ENCODE measurements at regions of chr15 and their contacts with region 1.

Region 1: GRCh38 chr15:77419836-77420609 is at the start of gene PEAK1:
- DNase-seq: peak; percentile 99 to 100 (median 100)
- ATAC-seq: peak; percentile 99
- H3K4me3 ChIP-seq: peak within 1 kb of the TSS; percentile 70
- H3K4me3 Mint-ChIP-seq: peak within 1 kb of the TSS; percentile 99
- H3K27ac ChIP-seq: peak within 1 kb of the TSS; percentile 86 to 87
- H3K27ac Mint-ChIP-seq: peak within 1 kb of the TSS; percentile 96
- H3K4me1 ChIP-seq: peaks cover 14% of the 10 kb centered on the region
- H3K4me1 Mint-ChIP-seq: peaks cover 54% of the 10 kb centered on the region
- H3K27me3 ChIP-seq: no peaks in the 10 kb centered on the region
- H3K27me3 Mint-ChIP-seq: no peaks in the 10 kb centered on the region
- CTCF ChIP-seq: no peak
- total RNA-seq, gene PEAK1: 9.2 to 11.0 TPM

Region 2: GRCh38 chr15:76905013-76905839 is 514.8 kb before region 1 on chr15 and contains the start of gene SCAPER:
- CTCF ChIA-PET with region 1: no interaction called
- POLR2A ChIA-PET with region 1: interaction called, 3 read pairs
- intact Hi-C with region 1: loop called in 1 of 2 experiments (anchors 5 kb)
- DNase-seq: peak; percentile 77 to 96 (median 90)
- ATAC-seq: peak; percentile 89
- H3K4me3 ChIP-seq: peak within 1 kb of the TSS; percentile 83
- H3K4me3 Mint-ChIP-seq: peak within 1 kb of the TSS; percentile 96
- H3K27ac ChIP-seq: peak within 1 kb of the TSS; percentile 60 to 75
- H3K27ac Mint-ChIP-seq: peak within 1 kb of the TSS; percentile 95
- H3K4me1 ChIP-seq: peaks cover 25% of the 10 kb centered on the region
- H3K4me1 Mint-ChIP-seq: peaks cover 31% of the 10 kb centered on the region
- H3K27me3 ChIP-seq: no peaks in the 10 kb centered on the region
- H3K27me3 Mint-ChIP-seq: no peaks in the 10 kb centered on the region
- CTCF ChIP-seq: no peak
- total RNA-seq, gene SCAPER: 40.3 to 41.2 TPM

Region 3: GRCh38 chr15:76931397-76932007 is 488.5 kb before region 1 on chr15 and contains the start of gene RCN2:
- CTCF ChIA-PET with region 1: no interaction called
- POLR2A ChIA-PET with region 1: no interaction called
- intact Hi-C with region 1: loop called in 1 of 2 experiments (anchors 10 kb)
- DNase-seq: peak; percentile 84 to 96 (median 91)
- ATAC-seq: peak; percentile 98
- H3K4me3 ChIP-seq: peak within 1 kb of the TSS; percentile 59
- H3K4me3 Mint-ChIP-seq: peak within 1 kb of the TSS; percentile 98
- H3K27ac ChIP-seq: peak within 1 kb of the TSS in 1 of 2 donors; percentile 53
- H3K27ac Mint-ChIP-seq: peak within 1 kb of the TSS; percentile 91
- H3K4me1 ChIP-seq: peaks cover 6% of the 10 kb centered on the region
- H3K4me1 Mint-ChIP-seq: peaks cover 41% of the 10 kb centered on the region
- H3K27me3 ChIP-seq: no peaks in the 10 kb centered on the region
- H3K27me3 Mint-ChIP-seq: peaks cover 1% of the 10 kb centered on the region
- CTCF ChIP-seq: no peak
- total RNA-seq, gene RCN2: 18.1 to 19.1 TPM

Region 4: DNA sequence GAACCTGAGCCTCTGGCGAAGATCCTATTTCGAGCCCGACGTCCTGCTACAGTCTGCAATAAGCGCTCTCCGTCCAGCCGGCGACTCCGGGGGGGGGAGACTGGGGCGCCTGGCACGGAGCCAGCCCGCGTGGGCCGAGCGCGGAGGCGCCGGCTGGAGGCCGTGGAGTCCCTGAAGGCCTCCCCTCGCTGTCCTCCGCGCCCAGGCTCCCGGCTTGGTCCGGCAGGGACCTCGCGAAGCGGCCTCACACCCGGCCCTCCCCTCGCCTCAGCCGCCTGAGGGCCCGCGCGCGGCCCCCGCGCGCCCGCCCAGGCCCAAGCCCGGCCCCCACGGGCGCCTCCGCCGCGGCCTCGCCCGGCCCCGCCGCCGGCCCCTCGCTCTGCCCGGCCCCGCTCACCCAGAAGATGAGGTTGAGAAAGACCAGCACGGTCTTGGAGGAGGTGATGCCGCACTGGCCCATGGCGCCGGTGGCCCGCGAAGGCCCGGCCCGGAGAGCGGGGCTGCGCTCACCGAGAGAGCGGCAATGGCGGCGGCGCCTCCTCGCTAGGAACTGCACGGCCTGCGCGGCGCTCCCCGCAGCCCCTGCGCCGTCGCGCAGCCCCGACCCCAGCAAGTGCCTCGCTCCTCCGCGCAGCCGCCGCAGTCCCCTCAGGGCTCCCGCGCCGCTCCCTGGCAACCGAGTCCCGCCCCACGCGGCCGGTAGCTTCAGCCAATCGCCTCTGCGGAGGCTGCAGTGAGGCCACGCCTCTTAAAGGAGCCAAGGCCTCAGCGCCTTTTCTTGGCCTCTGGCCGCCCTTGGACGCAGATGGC is 349.3 kb before region 1 on chr15 and contains the start of gene TSPAN3:
- CTCF ChIA-PET with region 1: no interaction called
- POLR2A ChIA-PET with region 1: no interaction called
- intact Hi-C with region 1: loop called in 1 of 2 experiments (anchors 5 kb)
- DNase-seq: peak; percentile 85 to 95 (median 92)
- ATAC-seq: peak; percentile 99
- H3K4me3 ChIP-seq: peak within 1 kb of the TSS; percentile 60
- H3K4me3 Mint-ChIP-seq: peak within 1 kb of the TSS; percentile 97
- H3K27ac ChIP-seq: no peak within 1 kb of the TSS
- H3K27ac Mint-ChIP-seq: peak within 1 kb of the TSS; percentile 85
- H3K4me1 ChIP-seq: peaks cover 18% of the 10 kb centered on the region
- H3K4me1 Mint-ChIP-seq: peaks cover 37% of the 10 kb centered on the region
- H3K27me3 ChIP-seq: no peaks in the 10 kb centered on the region
- H3K27me3 Mint-ChIP-seq: peaks cover 3% of the 10 kb centered on the region
- CTCF ChIP-seq: no peak
- total RNA-seq, gene TSPAN3: 14.7 to 15.5 TPM

Region 5: GRCh38 chr15:77409259-77410156 is 10.5 kb before region 1 on chr15:
- CTCF ChIA-PET with region 1: no interaction called
- POLR2A ChIA-PET with region 1: interaction called, 13 read pairs
- intact Hi-C with region 1: loop called in 1 of 2 experiments (anchors 1 kb)
- DNase-seq: peak in 5 of 14 experiments; percentile 5 to 68 (median 35)
- ATAC-seq: peak; percentile 92
- H3K4me3 ChIP-seq: no peak overlapping the region
- H3K4me3 Mint-ChIP-seq: peak overlapping the region; percentile 54
- H3K27ac ChIP-seq: no peak overlapping the region
- H3K27ac Mint-ChIP-seq: peak overlapping the region; percentile 13
- H3K4me1 ChIP-seq: peaks cover 6% of the 10 kb centered on the region
- H3K4me1 Mint-ChIP-seq: peaks cover 36% of the 10 kb centered on the region
- H3K27me3 ChIP-seq: no peaks in the 10 kb centered on the region
- H3K27me3 Mint-ChIP-seq: no peaks in the 10 kb centered on the region
- CTCF ChIP-seq: no peak

Region 6: GRCh38 chr15:78149068-78149804 is 729.2 kb after region 1 on chr15 and contains the start of gene IDH3A:
- CTCF ChIA-PET with region 1: no interaction called
- POLR2A ChIA-PET with region 1: no interaction called
- intact Hi-C with region 1: loop called in 1 of 2 experiments (anchors 10 kb)
- DNase-seq: peak; percentile 99 to 100 (median 100)
- ATAC-seq: peak; percentile 94
- H3K4me3 ChIP-seq: peak within 1 kb of the TSS; percentile 69
- H3K4me3 Mint-ChIP-seq: peak within 1 kb of the TSS; percentile 97
- H3K27ac ChIP-seq: peak within 1 kb of the TSS in 1 of 2 donors; percentile 29
- H3K27ac Mint-ChIP-seq: peak within 1 kb of the TSS; percentile 91
- H3K4me1 ChIP-seq: peaks cover 27% of the 10 kb centered on the region
- H3K4me1 Mint-ChIP-seq: peaks cover 45% of the 10 kb centered on the region
- H3K27me3 ChIP-seq: no peaks in the 10 kb centered on the region
- H3K27me3 Mint-ChIP-seq: no peaks in the 10 kb centered on the region
- CTCF ChIP-seq: no peak
- total RNA-seq, gene IDH3A: 47.5 to 47.6 TPM